Pancreas (tissue), 10 donors: ENCODE measurements at regions of chr1 and their contacts with region 1.

Region 1: GRCh38 chr1:67489643-67490042 is 59.4 kb upstream of the SERBP1 start:
- DNase-seq: no peak
- ATAC-seq: peak in 3 of 4 donors; percentile 49 to 70 (median 67)
- H3K4me3 ChIP-seq: no peak overlapping the region
- H3K27ac ChIP-seq: no peak overlapping the region
- H3K4me1 ChIP-seq: no peaks in the 10 kb centered on the region
- H3K27me3 ChIP-seq: no peaks in the 10 kb centered on the region
- CTCF ChIP-seq: no peak

Region 2: GRCh38 chr1:67230539-67230938 is 259.1 kb before region 1 on chr1:
- intact Hi-C with region 1: loop called in 1 of 3 experiments (anchors 10 kb)
- DNase-seq: no peak
- ATAC-seq: no peak
- H3K4me3 ChIP-seq: no peak overlapping the region
- H3K27ac ChIP-seq: no peak overlapping the region
- H3K4me1 ChIP-seq: no peaks in the 10 kb centered on the region
- H3K27me3 ChIP-seq: no peaks in the 10 kb centered on the region
- CTCF ChIP-seq: no peak

Region 3: GRCh38 chr1:67347688-67348472 is 141.8 kb before region 1 on chr1:
- intact Hi-C with region 1: loop called in 1 of 3 experiments (anchors 10 kb)
- DNase-seq: peak in 3 of 6 donors; percentile 6 to 42 (median 16)
- ATAC-seq: peak in 3 of 4 donors; percentile 78 to 85 (median 81)
- H3K4me3 ChIP-seq: no peak overlapping the region
- H3K27ac ChIP-seq: no peak overlapping the region
- H3K4me1 ChIP-seq: no peaks in the 10 kb centered on the region
- H3K27me3 ChIP-seq: no peaks in the 10 kb centered on the region
- CTCF ChIP-seq: peak; percentile 14 to 52 (median 43)